ENCODE measurements at regions of chr17 and their contacts with region 1.

Region 1: DNA sequence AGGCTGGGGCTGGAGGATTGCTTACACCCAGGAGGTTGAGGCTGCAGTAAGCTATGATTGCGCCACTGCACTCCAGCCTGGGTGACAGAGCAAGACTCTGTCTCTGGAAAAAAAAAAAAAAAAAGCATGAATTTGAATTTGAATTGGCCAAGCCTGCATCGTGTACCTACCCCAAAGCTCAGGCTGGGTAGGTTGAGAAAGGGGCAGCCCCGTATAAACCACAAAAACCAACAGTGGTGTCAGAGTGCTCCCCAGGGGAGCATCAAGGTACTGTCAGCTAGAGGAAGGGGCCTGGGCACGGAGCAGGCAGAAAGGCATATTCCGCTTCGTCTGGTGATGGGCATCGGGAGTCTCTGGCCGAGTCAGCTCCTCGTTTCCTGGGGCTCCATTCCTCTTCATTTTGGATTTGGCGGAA is 40.9 kb downstream of the RAP1GAP2 start:
- DNase-seq: no peak
- H3K4me3 ChIP-seq: no peak overlapping the region
- H3K4me3 Mint-ChIP-seq: no peak overlapping the region
- H3K27ac Mint-ChIP-seq: no peak overlapping the region
- H3K4me1 ChIP-seq: no peaks in the 10 kb centered on the region
- H3K4me1 Mint-ChIP-seq: no peaks in the 10 kb centered on the region
- H3K27me3 ChIP-seq: no peaks in the 10 kb centered on the region
- H3K27me3 Mint-ChIP-seq: no peaks in the 10 kb centered on the region
- CTCF ChIP-seq: no peak

Region 2: GRCh38 chr17:2892305-2892971 is 55.3 kb after region 1 on chr17:
- CTCF ChIA-PET with region 1: interaction called, 13 read pairs
- POLR2A ChIA-PET with region 1: no interaction called
- intact Hi-C with region 1: no loop called
- DNase-seq: peak in 1 of 2 experiments; percentile 55
- H3K4me3 ChIP-seq: no peak overlapping the region
- H3K4me3 Mint-ChIP-seq: no peak overlapping the region
- H3K27ac Mint-ChIP-seq: peak overlapping the region; percentile 80
- H3K4me1 ChIP-seq: peaks cover 36% of the 10 kb centered on the region
- H3K4me1 Mint-ChIP-seq: peaks cover 39% of the 10 kb centered on the region
- H3K27me3 ChIP-seq: no peaks in the 10 kb centered on the region
- H3K27me3 Mint-ChIP-seq: no peaks in the 10 kb centered on the region
- CTCF ChIP-seq: no peak